ENCODE measurements at regions of chr6 and their contacts with region 1.

Region 1: GRCh38 chr6:127342946-127343808 is at the start of gene ECHDC1:
- DNase-seq: peak; percentile 65
- ATAC-seq: peak; percentile 63
- H3K4me3 ChIP-seq: peak within 1 kb of the TSS; percentile 94
- H3K27ac ChIP-seq: peak within 1 kb of the TSS; percentile 80
- H3K4me1 ChIP-seq: peaks cover 58% of the 10 kb centered on the region
- H3K27me3 ChIP-seq: no peaks in the 10 kb centered on the region
- CTCF ChIP-seq: no peak
- total RNA-seq, gene ECHDC1: 24.2 and 34.5 TPM in 2 replicates

Region 2: GRCh38 chr6:127366281-127367022 is 23.3 kb after region 1 on chr6:
- CTCF ChIA-PET with region 1: no interaction called
- POLR2A ChIA-PET with region 1: no interaction called
- intact Hi-C with region 1: loop called (anchors 2 kb)
- DNase-seq: peak; percentile 91
- ATAC-seq: peak; percentile 98
- H3K4me3 ChIP-seq: no peak overlapping the region
- H3K27ac ChIP-seq: peak overlapping the region; percentile 59
- H3K4me1 ChIP-seq: peaks cover 17% of the 10 kb centered on the region
- H3K27me3 ChIP-seq: no peaks in the 10 kb centered on the region
- CTCF ChIP-seq: no peak

Region 3: DNA sequence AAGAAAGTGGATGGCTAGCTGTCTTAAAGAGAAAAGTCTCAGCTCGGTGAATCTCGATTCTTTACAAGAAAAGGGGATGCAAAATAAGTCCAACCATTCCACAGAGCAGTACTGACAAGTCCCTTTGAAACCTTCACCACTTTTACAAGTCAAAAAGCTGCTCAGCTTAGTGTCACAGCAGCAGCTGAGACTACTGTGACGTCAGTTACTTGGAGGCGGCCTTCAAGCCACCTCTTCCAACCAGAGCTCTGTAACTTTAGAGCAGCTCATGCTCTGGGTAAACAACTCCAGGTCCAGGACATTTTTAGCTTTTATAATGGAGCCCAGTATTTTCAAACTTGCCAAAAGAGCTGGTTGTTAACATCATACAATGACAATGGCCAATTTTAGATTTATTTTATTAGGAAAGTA is 116.1 kb after region 1 on chr6 and contains the start of gene KIAA0408:
- CTCF ChIA-PET with region 1: no interaction called
- POLR2A ChIA-PET with region 1: no interaction called
- intact Hi-C with region 1: loop called (anchors 2 kb)
- DNase-seq: peak; percentile 45
- ATAC-seq: peak; percentile 81
- H3K4me3 ChIP-seq: no peak within 1 kb of the TSS
- H3K27ac ChIP-seq: no peak within 1 kb of the TSS
- H3K4me1 ChIP-seq: peaks cover 20% of the 10 kb centered on the region
- H3K27me3 ChIP-seq: no peaks in the 10 kb centered on the region
- CTCF ChIP-seq: no peak
- total RNA-seq, gene KIAA0408: 0.04 TPM in 1 of 2 replicates, not detected in the other

Region 4: DNA sequence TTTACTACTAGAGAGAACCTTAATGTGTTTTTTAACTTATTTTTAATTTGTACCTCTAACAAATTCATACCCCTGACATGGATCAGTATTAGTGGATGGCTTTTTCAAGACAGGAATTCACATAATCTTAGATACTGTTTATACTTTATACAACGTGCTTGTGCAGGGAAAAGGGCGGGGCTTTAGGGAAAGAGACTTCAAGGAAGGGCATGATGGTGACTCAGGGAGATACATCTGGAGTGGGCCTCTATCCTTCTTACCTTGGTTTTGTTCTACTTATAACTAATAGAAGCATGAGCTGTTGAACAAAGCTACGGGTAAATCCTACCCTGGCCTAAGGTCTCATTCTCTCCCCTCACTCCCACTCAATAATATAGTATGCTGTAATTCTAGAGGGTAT is 394.6 kb after region 1 on chr6:
- CTCF ChIA-PET with region 1: no interaction called
- POLR2A ChIA-PET with region 1: no interaction called
- intact Hi-C with region 1: no loop called
- DNase-seq: no peak
- ATAC-seq: no peak; the same call in 1 of the 2 replicates
- H3K4me3 ChIP-seq: no peak overlapping the region
- H3K27ac ChIP-seq: no peak overlapping the region
- H3K4me1 ChIP-seq: no peaks in the 10 kb centered on the region
- H3K27me3 ChIP-seq: peaks cover 10% of the 10 kb centered on the region; the same call in 1 of the 2 replicates
- CTCF ChIP-seq: no peak

Region 5: GRCh38 chr6:127880429-127880828 is 537.3 kb after region 1 on chr6:
- CTCF ChIA-PET with region 1: no interaction called
- POLR2A ChIA-PET with region 1: no interaction called
- intact Hi-C with region 1: no loop called
- DNase-seq: no peak
- ATAC-seq: no peak
- H3K4me3 ChIP-seq: no peak overlapping the region
- H3K27ac ChIP-seq: no peak overlapping the region
- H3K4me1 ChIP-seq: no peaks in the 10 kb centered on the region
- H3K27me3 ChIP-seq: no peaks in the 10 kb centered on the region
- CTCF ChIP-seq: no peak